ENCODE measurements at regions of chr20 and their contacts with region 1.

Region 1: DNA sequence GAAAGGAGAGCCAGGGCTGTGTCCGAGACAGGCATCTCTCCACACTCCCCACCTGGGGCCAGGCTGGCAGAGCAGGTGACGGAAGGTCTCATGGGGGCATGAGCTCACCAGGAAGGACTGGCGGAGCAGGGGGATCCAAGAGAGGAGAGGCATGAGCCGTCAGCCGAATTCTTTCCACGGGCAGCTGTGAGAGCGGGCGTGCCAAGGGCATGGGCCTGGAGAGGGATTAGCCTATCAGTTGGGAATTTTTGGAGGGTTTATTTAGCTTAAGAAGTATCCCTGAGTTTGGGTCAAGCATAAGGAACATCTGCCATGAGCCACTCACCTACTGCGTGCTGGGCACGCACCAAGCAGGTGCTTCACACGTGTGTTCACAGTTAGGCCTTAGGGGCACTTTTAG is 60.2 kb upstream of the ZNFX1 start:
- DNase-seq: no peak
- ATAC-seq: no peak
- H3K4me3 ChIP-seq: no peak overlapping the region
- H3K27ac ChIP-seq: no peak overlapping the region
- H3K4me1 ChIP-seq: peaks cover 9% of the 10 kb centered on the region
- CTCF ChIP-seq: no peak
- EP300 ChIP-seq: no peak
- POLR2A ChIP-seq: no peak
- RAD21 ChIP-seq: no peak

Region 2: DNA sequence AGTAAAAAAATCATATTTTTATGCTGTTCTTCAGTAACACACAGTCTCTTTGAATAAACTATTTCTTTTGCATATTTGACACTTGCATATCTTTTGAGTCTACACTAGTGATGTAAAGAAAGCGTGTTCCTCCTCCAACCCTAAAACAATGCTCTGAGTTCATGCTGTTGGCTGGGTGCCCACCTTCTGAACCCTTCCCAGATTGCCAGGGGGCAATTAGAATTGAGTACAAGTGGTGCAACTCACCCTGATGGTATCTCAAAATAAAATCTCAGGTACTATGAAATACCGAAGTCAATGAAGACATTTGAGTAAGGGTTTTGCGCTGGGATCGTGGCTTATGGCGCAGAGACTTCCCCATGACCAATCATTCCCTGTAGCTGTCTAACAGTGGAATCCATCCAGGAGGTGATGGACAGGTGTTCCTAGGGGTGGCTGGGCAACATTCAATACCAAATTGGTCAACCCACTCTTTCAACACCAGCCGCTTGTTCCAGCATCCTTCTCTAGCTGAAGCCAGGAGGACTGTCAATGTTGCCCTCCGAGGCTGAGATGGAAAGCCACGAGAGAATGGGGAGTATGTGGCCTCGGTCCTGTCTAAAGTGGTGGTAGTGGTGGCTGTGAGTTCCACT is 34.1 kb after region 1 on chr20:
- CTCF ChIA-PET with region 1: interaction called, 10 read pairs
- POLR2A ChIA-PET with region 1: no interaction called
- DNase-seq: no peak
- ATAC-seq: no peak
- H3K4me3 ChIP-seq: no peak overlapping the region
- H3K27ac ChIP-seq: no peak overlapping the region
- H3K4me1 ChIP-seq: no peaks in the 10 kb centered on the region
- CTCF ChIP-seq: no peak
- EP300 ChIP-seq: no peak
- POLR2A ChIP-seq: no peak
- RAD21 ChIP-seq: no peak

Region 3: GRCh38 chr20:49496553-49497397 is 158.7 kb after region 1 on chr20:
- CTCF ChIA-PET with region 1: interaction called, 219 read pairs
- POLR2A ChIA-PET with region 1: no interaction called
- DNase-seq: no peak
- ATAC-seq: no peak
- H3K4me3 ChIP-seq: no peak overlapping the region
- H3K27ac ChIP-seq: no peak overlapping the region
- H3K4me1 ChIP-seq: no peaks in the 10 kb centered on the region
- CTCF ChIP-seq: no peak
- EP300 ChIP-seq: no peak
- POLR2A ChIP-seq: no peak
- RAD21 ChIP-seq: no peak

Region 4: DNA sequence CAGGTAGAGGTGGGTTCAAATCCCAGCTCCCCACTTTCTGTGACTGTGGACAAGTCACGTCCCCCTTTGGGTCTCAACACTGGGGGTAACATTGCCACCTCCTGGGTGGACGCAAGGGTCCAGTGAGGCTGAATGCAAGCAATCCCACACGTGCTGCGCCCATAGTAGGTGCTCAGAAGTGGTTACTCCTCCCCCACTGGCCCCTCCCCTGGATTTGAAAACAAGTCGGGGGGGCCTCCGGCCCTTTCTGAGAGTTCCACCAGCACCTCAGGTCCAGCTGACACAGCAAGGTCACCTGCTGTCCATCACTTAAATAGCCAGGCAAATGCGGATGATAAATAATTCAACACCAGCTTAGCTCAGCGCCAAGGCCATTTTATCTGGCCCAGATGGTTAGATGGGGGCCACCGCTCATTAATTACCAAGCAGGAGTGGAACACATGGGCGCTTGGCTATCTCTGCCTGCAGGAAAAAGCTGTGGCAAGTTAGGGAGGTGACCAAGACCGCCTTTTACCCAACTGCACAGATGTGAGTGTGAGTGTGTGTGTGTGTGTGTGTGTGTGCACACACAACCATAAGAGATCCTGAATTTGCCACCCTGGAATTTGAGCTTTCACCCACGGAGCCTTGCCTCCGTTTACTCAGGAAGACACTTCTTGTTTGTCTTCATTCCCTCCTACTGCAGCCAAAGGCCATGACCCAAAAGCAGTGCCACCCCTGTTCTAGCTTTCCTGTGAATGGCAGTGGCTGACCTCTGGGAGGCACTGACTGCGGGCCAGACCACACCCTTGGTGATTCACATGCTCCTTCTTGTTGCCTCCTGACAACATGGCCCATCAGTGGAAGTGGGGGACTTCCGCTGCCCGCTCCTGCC is 179.1 kb after region 1 on chr20:
- CTCF ChIA-PET with region 1: interaction called, 219 read pairs
- POLR2A ChIA-PET with region 1: no interaction called
- DNase-seq: no peak
- ATAC-seq: peak in 1 of 2 experiments; percentile 48; a peak in 3 of 6 replicates
- H3K4me3 ChIP-seq: no peak overlapping the region
- H3K27ac ChIP-seq: no peak overlapping the region
- H3K4me1 ChIP-seq: peaks cover 7% of the 10 kb centered on the region; the same call in 1 of the 3 replicates
- CTCF ChIP-seq: no peak
- EP300 ChIP-seq: no peak
- POLR2A ChIP-seq: no peak
- RAD21 ChIP-seq: no peak

Region 5: GRCh38 chr20:49534255-49534712 is 196.2 kb after region 1 on chr20:
- CTCF ChIA-PET with region 1: interaction called, 86 read pairs
- POLR2A ChIA-PET with region 1: no interaction called
- DNase-seq: peak; percentile 57 to 80
- ATAC-seq: peak; percentile 91
- H3K4me3 ChIP-seq: no peak overlapping the region
- H3K27ac ChIP-seq: no peak overlapping the region
- H3K4me1 ChIP-seq: no peaks in the 10 kb centered on the region
- CTCF ChIP-seq: peak; percentile 85
- EP300 ChIP-seq: no peak
- POLR2A ChIP-seq: no peak
- RAD21 ChIP-seq: peak; percentile 81 to 82

Region 6: DNA sequence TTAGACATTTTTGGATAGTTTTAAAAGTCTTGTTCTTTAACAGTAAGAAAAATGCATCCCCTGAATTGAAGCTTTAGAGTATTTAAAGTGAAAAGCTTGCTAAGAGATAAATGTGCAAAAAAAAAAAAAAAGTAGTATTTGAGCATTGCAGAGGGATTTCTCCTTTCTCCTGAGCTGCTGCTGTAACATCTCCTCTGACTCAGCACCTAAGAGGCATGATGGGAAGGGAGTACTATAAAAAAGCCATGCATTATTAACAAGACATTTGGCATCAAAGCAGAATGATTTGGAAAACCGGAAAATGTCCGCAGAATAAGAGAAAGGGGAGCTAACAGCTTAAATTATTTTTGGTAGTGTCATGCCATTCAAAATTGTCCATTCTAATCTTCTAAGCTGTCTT is 347.7 kb after region 1 on chr20:
- CTCF ChIA-PET with region 1: no interaction called
- POLR2A ChIA-PET with region 1: no interaction called
- DNase-seq: no peak
- ATAC-seq: peak; percentile 48 to 70; a peak in 4 of 6 replicates
- H3K4me3 ChIP-seq: no peak overlapping the region
- H3K27ac ChIP-seq: peak overlapping the region; percentile 98
- H3K4me1 ChIP-seq: peaks cover 100% of the 10 kb centered on the region
- CTCF ChIP-seq: no peak
- EP300 ChIP-seq: no peak
- POLR2A ChIP-seq: no peak
- RAD21 ChIP-seq: no peak